Heart left ventricle (tissue), 16 donors: ENCODE measurements at regions of chr6 and their contacts with region 1.

Region 1: GRCh38 chr6:66291905-66292304 is 584.9 kb upstream of the EYS start:
- DNase-seq: no peak
- ATAC-seq: no peak
- H3K4me3 ChIP-seq: no peak overlapping the region
- H3K27ac ChIP-seq: no peak overlapping the region
- H3K4me1 ChIP-seq: no peaks in the 10 kb centered on the region
- H3K27me3 ChIP-seq: no peaks in the 10 kb centered on the region
- CTCF ChIP-seq: no peak
- POLR2A ChIP-seq: no peak

Region 2: GRCh38 chr6:66340736-66341135 is 48.8 kb after region 1 on chr6:
- intact Hi-C with region 1: loop called in 1 of 10 experiments (anchors 1 kb)
- DNase-seq: no peak
- ATAC-seq: no peak
- H3K4me3 ChIP-seq: no peak overlapping the region
- H3K27ac ChIP-seq: no peak overlapping the region
- H3K4me1 ChIP-seq: no peaks in the 10 kb centered on the region
- H3K27me3 ChIP-seq: no peaks in the 10 kb centered on the region
- CTCF ChIP-seq: no peak
- POLR2A ChIP-seq: no peak

Region 3: DNA sequence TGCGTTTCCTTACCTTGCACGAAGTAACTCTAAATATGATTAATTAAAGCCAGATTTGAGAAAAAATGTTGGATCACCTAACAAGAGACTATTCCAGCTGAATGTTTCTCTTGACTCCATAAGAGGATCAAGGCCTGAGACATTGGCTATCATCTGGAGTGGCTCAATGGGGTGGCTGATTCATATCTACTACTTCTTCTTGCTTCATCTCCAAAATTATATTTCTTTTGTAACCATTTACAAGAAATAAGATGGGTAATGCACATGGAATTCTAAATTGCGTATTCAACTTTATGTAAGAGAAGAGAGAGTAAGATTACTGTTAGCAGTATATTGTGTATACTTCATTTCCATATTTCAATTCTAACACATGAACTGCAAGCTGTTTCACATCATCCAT is 234.2 kb after region 1 on chr6:
- intact Hi-C with region 1: no loop called
- DNase-seq: no peak
- ATAC-seq: no peak
- H3K4me3 ChIP-seq: no peak overlapping the region
- H3K27ac ChIP-seq: no peak overlapping the region
- H3K4me1 ChIP-seq: no peaks in the 10 kb centered on the region
- H3K27me3 ChIP-seq: no peaks in the 10 kb centered on the region
- CTCF ChIP-seq: no peak
- POLR2A ChIP-seq: no peak